ENCODE measurements at regions of chr11 and their contacts with region 1.

Region 1: GRCh38 chr11:9137293-9138132 is 46.1 kb upstream of the SCUBE2 start:
- DNase-seq: peak; percentile 78
- CTCF ChIP-seq: peak; percentile 96

Region 2: GRCh38 chr11:8959546-8960166 is 177.9 kb before region 1 on chr11:
- CTCF ChIA-PET with region 1: interaction called, 11 read pairs
- POLR2A ChIA-PET with region 1: no interaction called
- DNase-seq: peak; percentile 82
- CTCF ChIP-seq: peak; percentile 58

Region 3: DNA sequence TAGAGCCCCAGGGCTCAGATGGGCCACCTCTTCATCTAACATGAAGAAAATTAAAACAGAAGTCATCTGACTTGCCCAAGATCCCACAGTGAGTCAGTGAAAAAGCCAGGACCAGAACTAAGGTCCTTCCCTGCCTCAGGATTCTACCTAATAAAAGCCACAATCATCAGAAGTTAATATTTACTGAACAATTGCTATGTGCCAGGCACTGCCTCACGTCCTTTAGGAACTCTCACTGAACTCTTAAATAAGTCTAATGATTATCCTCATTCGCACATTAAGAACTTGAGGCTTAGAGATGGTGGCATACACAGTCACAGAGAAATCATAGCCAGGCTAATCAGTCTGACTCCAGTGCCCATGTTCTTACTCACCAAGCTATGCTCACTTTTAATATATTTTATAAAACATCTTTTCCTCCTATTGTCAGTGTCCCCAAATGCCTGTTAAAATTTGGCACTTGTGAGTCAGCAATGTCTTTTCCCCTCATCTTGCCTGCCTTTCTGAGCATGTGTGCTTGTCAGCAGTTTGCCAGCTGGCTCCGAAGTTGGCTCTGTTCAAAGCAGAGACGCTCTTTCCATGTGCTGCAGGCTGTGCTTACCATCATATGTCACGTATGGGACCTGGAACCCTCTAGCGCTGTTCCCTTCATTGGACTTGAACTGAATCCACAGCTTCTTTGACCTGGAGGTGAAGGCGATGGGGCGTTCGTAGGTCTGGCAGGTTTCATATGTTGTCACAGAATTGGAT is 112.2 kb before region 1 on chr11:
- CTCF ChIA-PET with region 1: interaction called, 14 read pairs
- POLR2A ChIA-PET with region 1: no interaction called
- DNase-seq: no peak
- CTCF ChIP-seq: no peak

Region 4: DNA sequence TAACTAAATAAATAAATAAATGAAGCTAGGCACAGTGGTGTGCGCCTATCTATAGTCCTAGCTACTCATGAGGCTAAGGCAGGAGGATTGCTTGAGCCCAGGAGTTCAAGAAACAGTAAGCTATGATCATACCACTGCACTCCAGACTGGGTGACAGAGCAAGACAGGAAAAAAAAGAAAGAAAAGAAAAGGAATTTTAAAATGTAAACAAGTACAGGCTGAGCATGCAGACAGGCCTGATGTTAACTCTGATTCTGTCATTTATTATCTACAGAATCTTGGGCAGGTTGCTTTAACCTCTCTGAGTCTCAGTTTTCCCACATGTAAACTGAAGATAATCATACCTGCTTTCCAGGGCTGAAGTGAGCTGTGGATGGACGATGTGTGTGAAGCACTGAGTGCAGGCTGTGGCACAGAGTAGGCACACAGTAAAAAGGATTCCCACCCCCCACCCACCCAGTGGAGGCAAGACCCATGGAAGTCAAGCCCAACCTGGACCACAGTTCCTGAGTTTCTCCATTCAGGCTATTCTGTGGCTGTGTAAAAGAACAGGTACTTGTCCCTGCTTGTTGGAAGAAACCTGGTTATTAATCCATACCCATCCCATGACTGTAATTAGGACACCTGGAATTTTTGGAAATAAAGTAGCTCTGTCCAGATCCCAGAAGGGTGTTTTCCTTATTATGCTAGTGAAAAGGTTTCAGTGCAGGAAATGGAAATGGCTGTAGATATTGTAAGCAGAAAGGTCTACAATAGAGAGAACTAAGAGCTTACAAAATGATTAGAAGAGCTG is 27.4 kb before region 1 on chr11:
- CTCF ChIA-PET with region 1: interaction called, 24 read pairs
- POLR2A ChIA-PET with region 1: no interaction called
- DNase-seq: no peak
- CTCF ChIP-seq: no peak

Region 5: DNA sequence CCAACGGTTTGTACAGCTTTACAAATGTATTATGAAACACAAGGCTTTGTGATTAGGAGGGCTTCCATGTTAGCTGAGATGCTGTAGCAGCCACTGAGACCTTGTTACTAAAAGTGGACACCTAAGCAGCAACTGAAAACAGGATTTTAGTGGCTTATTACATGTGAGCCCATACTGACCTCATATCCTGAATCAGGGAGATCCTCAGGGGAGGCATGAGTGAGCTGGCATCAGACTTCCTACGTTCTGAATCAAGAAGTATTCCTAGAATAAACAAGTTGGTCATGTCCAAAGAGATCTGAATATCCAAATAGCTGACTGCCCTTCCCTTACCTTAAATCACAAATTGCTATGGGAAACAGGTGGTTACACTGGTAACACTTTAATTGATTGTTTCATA is 13.0 kb after region 1 on chr11:
- CTCF ChIA-PET with region 1: interaction called, 88 read pairs
- POLR2A ChIA-PET with region 1: no interaction called
- DNase-seq: no peak
- CTCF ChIP-seq: no peak

Region 6: GRCh38 chr11:9206496-9206895 is 69.0 kb after region 1 on chr11:
- CTCF ChIA-PET with region 1: no interaction called
- POLR2A ChIA-PET with region 1: no interaction called
- DNase-seq: no peak
- CTCF ChIP-seq: no peak

Measured in GM10248 (cell line).